Calu3 (cell line): ENCODE measurements at regions of chr2 and their contacts with region 1.

Region 1: DNA sequence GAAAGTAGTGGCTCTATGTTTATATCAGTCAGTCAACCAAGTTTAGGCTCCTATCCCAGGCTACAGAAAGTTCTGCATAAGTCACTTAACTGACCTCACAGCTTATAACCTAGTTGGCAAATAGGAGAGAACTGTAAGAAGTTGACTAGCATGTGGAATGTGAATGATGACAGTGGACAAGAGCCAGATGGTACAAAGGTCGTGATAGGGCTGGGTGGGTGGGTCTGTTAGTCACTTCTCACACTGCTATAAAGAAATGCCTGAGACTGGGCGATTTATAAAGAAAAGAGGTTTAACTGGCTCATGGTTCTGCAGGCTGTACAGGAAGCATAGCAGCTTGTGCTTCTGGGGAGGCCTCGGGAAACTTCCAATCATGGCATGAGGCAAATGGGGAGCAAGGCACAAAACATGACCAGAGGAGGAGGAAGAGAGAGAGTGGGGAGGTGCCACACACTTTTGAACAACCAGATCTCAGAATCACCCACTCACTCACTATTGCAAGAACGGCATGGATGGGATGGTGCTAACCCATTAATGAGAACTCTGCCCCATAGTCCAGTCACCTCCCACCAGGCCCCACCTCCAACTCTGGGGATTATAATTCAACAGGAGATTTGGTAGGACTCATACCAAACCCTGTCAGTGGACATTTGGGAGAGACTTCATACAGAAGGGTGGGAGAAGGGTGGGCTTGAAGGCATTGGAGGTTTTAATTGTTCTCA is 68.8 kb downstream of the LTBP1 start:
- DNase-seq: peak; percentile 30
- H3K4me3 Mint-ChIP-seq: no peak overlapping the region
- H3K27ac Mint-ChIP-seq: peak overlapping the region; percentile 22
- H3K4me1 Mint-ChIP-seq: peaks cover 38% of the 10 kb centered on the region
- H3K27me3 Mint-ChIP-seq: no peaks in the 10 kb centered on the region
- CTCF ChIP-seq: no peak

Region 2: GRCh38 chr2:32802879-32803278 is 212.7 kb before region 1 on chr2:
- CTCF ChIA-PET with region 1: interaction called, 17 read pairs
- intact Hi-C with region 1: no loop called
- DNase-seq: no peak
- H3K4me3 Mint-ChIP-seq: no peak overlapping the region
- H3K27ac Mint-ChIP-seq: no peak overlapping the region
- H3K4me1 Mint-ChIP-seq: peaks cover 19% of the 10 kb centered on the region
- H3K27me3 Mint-ChIP-seq: no peaks in the 10 kb centered on the region
- CTCF ChIP-seq: no peak

Region 3: GRCh38 chr2:32937602-32938448 is 77.8 kb before region 1 on chr2:
- CTCF ChIA-PET with region 1: no interaction called
- intact Hi-C with region 1: no loop called
- DNase-seq: peak; percentile 42
- H3K4me3 Mint-ChIP-seq: no peak overlapping the region
- H3K27ac Mint-ChIP-seq: peak overlapping the region; percentile 5
- H3K4me1 Mint-ChIP-seq: peaks cover 26% of the 10 kb centered on the region
- H3K27me3 Mint-ChIP-seq: no peaks in the 10 kb centered on the region
- CTCF ChIP-seq: no peak

Region 4: DNA sequence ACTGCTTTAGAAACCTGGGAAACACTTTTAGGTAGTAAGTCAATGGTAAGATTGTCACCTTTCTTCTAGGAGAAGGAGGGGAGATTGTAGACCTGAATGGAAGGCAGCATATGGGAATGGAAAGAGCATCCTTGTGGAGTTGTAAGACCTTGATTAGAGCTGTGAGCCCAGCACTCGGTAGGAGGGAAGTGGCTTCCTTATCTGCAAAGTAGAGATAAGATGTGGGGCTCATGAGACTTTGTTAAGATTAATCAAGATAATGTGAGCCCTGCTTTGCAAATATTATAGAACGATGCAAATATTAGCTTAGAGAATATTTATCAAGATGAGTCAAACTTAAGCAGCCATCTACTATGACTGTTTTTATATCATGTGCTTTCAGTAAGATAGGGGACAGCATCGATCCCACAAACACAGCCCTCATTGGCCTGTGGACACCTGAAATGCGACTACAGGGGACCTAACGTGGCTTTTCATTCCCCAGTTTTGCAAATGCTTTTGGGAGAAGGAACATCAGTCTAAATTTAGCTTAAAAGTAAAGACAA is 174.9 kb after region 1 on chr2:
- CTCF ChIA-PET with region 1: no interaction called
- intact Hi-C with region 1: no loop called
- DNase-seq: no peak
- H3K4me3 Mint-ChIP-seq: no peak overlapping the region
- H3K27ac Mint-ChIP-seq: no peak overlapping the region
- H3K4me1 Mint-ChIP-seq: peaks cover 7% of the 10 kb centered on the region
- H3K27me3 Mint-ChIP-seq: no peaks in the 10 kb centered on the region
- CTCF ChIP-seq: no peak